PC-9 (cell line): ENCODE measurements at regions of chr9 and their contacts with region 1.

Region 1: GRCh38 chr9:94681508-94681907 is 42.2 kb upstream of the FBP1 start:
- DNase-seq: peak; percentile 51 to 59
- H3K4me3 ChIP-seq: no peak overlapping the region
- H3K27ac ChIP-seq: no peak overlapping the region
- H3K4me1 ChIP-seq: 0 out of 2 replicates have a peak, but pooled peaks cover 6% of the 10 kb centered on the region
- H3K27me3 ChIP-seq: no peaks in the 10 kb centered on the region
- CTCF ChIP-seq: peak; percentile 74

Region 2: GRCh38 chr9:95085861-95086563 is 404.5 kb after region 1 on chr9:
- CTCF ChIA-PET with region 1: no interaction called
- POLR2A ChIA-PET with region 1: no interaction called
- intact Hi-C with region 1: loop called (anchors 1 kb)
- DNase-seq: no peak
- H3K4me3 ChIP-seq: no peak overlapping the region
- H3K27ac ChIP-seq: no peak overlapping the region
- H3K4me1 ChIP-seq: peaks cover 20% of the 10 kb centered on the region
- H3K27me3 ChIP-seq: no peaks in the 10 kb centered on the region
- CTCF ChIP-seq: no peak

Region 3: DNA sequence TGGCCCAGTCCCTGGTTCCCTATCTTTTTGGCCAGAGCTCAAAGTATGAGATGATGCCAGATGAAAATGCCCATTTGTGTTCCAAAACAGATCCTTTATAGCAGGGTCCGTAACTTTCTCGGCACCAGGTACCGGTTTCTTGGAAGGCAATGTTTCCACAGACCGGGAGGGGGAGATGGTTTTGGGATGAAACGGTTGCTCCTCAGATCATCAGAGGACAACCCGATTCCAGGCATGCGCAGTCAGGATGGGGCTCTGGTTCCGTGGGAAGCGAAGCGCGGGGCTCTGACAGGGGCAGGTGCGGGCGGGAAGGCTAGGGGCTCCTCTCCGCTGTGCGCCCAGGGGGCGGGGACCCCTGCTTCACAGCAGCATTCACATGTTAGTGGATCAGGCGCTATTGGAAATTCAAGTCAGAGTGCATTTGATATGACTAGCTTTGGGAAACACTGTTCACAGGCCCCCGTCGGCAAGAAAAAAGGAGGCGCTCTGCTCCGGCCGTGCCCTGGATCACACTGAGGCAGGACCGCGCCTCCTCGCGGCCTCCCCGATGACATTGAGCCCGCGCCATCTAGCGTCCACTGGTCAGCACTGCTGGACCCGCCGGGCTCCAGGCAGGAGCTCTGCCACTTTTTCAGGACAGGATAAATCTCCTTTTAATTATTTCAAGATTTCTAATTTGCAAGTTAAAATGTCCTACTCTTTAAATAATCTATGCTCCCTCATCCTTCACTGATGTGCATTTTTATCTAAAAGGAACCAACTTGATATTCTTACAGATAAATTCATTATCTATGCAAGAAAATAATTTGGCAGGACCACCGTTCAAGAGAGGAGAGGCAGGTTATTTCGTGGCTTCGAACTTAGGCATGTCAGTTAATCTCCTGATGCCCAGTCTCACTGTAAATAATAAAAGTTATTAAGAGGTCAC is 446.0 kb after region 1 on chr9:
- CTCF ChIA-PET with region 1: interaction called, 18 read pairs
- POLR2A ChIA-PET with region 1: no interaction called
- intact Hi-C with region 1: loop called (anchors 1 kb)
- DNase-seq: peak; percentile 43 to 83
- H3K4me3 ChIP-seq: no peak overlapping the region
- H3K27ac ChIP-seq: no peak overlapping the region
- H3K4me1 ChIP-seq: no peaks in the 10 kb centered on the region
- H3K27me3 ChIP-seq: no peaks in the 10 kb centered on the region
- CTCF ChIP-seq: peak; percentile 89